AG04449 (cell line): ENCODE measurements at regions of chr11 and their contacts with region 1.

Region 1: DNA sequence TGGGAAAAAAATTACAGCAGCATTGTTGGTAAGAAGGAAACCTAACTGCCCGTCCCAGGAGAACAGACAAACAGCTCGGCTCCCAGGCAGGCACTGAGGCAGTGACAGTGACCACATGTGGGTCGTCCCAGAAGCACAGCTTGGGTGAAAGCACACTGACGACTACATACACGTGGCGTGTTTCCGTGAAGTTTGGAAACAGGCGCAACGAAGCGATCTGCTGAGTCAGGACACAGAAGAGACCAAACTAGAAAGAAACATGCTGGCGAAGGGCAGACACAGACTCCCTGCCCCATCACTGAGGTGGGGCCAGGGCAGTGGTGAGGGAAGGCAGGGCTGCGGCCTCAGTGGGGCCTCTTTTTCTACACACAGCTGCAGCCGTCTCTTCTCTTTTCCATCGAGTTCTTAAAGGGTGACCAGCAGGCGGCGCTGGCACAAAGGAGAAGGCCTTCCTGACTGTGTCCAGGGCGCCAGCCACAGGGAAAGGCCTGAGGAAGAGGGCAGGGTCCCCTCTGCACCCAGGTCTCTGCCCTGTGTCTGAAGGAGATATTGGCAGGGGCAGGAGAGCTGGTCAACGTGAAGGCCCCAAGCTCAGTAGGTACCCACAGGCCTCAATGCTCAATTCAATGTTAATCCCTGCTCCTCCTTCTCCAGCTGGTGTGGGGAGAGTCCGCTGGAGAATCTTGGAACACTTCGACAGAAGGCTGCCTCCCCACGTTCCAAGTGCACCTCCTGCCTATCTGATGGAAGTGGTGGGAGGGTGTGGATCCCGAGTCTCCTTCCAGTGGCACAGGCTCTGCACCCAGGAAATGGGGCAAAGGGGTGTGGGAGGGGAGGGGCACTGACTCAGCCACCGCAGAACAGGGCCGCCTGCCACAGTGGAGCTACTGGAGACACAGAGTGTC is 19.9 kb downstream of the CARS1 start:
- DNase-seq: no peak
- H3K4me3 ChIP-seq: no peak overlapping the region
- CTCF ChIP-seq: peak; percentile 78

Region 2: DNA sequence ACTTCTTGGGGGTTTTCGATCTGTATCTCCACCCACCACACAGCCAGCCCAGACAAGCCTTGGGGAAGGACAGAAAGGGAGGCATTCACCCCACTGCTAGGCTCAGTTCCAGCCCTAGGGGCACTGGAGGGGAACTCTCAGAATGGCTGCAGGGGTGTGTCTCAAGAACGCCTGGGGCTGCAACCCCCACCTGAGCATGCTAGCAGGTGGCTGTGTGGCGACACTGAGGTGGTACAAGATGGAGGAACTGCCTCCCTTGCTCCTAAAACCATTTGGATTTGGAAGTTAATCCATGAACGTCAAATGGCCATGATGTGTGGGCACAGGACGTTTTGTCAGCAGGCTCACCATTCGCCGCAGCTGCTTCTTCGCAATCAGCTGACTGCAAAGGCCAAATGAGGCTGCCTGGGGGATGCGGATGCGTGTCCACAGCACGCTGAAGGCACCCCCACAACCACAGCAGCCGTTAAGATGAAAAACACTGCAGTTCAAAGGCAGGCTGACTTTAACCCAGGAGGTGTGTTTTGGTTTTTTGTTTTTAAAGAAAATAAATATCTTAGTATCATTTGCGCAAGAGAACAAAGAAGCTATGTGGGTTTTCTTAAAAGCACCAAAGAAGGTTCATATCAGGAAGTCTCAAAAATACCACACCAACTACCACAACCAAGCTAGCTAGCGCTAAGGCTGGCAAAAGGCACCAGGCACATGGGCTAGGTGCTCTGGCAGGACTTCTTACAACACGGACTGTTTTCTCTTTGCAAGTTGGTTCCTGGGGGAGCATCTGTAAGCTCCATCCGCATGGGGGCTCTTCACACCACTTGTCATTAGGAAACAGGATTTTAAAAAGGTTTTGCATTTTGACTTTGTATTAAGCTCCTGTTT is 23.0 kb before region 1 on chr11:
- CTCF ChIA-PET with region 1: interaction called, 26 read pairs
- POLR2A ChIA-PET with region 1: no interaction called
- DNase-seq: no peak
- H3K4me3 ChIP-seq: no peak overlapping the region
- CTCF ChIP-seq: no peak

Region 3: DNA sequence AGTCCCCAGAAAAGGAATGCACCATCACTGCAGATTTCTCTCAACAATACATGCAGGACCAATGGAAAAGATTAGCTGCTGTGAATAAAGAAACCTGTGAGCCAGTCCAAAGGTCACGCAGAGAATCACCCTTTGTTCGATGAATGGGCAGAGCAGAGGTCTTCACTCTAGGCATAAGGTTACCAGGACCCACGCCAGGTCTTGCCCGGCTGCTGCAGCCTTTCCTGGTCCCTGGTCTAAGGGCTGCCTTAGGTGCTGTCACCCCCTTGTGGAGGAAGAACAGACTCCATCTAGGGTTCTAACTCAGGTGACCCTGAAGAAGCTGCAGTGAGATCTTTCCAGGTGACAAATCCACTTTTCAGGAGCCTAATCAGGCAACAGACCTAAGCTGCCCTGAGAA is 16.2 kb before region 1 on chr11:
- CTCF ChIA-PET with region 1: interaction called, 122 read pairs
- POLR2A ChIA-PET with region 1: no interaction called
- DNase-seq: no peak
- H3K4me3 ChIP-seq: no peak overlapping the region
- CTCF ChIP-seq: peak; percentile 47

Region 4: DNA sequence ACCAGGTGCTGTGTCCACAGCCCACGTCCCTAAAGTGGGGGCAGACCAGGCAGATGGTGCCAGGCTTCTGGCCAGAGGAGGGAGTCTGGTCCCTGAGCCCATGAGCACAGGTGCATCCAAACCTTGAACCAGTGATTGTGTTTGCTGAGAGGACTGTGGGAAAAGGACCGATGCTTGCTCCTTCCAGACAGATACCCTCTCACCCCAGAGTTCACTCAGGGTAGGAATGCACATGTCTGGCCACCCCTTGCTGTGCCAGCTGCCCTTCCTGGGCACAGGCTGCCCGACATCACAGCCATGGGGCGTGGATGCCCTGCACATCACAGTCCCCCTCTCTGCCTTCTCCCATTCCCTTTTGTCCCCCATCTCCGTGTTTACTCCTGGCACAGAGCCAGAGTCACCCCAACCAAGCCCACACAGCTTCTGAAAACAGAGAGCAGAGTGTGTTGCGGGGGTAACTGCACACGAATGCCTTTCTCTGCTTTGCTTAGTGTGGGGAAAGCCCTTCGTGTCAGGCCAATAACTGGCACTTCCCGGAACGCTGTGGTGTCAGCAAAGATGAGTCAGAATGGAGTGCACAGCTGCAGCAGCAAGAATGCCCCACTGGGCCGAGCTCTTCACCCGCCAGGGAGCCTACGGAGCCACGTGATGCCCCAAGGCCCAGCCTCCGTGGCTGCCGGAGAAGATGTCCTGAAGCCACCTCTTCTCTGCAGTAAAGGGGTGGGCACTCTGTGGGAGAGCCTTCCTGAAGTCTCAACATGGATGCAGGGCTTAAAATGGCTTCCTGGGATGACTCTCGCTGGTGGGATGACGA is 12.3 kb after region 1 on chr11:
- CTCF ChIA-PET with region 1: interaction called, 77 read pairs
- POLR2A ChIA-PET with region 1: interaction called, 4 read pairs
- DNase-seq: peak; percentile 79
- H3K4me3 ChIP-seq: peak overlapping the region; percentile 41
- CTCF ChIP-seq: peak; percentile 53

Region 5: GRCh38 chr11:3057069-3057963 is 20.0 kb after region 1 on chr11 and contains the start of gene CARS1:
- CTCF ChIA-PET with region 1: interaction called, 77 read pairs
- POLR2A ChIA-PET with region 1: no interaction called
- DNase-seq: peak; percentile 40
- H3K4me3 ChIP-seq: peak within 1 kb of the TSS; percentile 98
- CTCF ChIP-seq: no peak

Region 6: GRCh38 chr11:3086114-3086513 is 48.8 kb after region 1 on chr11:
- CTCF ChIA-PET with region 1: interaction called, 157 read pairs
- POLR2A ChIA-PET with region 1: no interaction called
- DNase-seq: no peak
- H3K4me3 ChIP-seq: no peak overlapping the region
- CTCF ChIP-seq: no peak

Region 7: GRCh38 chr11:3120071-3120792 is 82.9 kb after region 1 on chr11:
- CTCF ChIA-PET with region 1: no interaction called
- POLR2A ChIA-PET with region 1: no interaction called
- DNase-seq: no peak
- H3K4me3 ChIP-seq: no peak overlapping the region
- CTCF ChIP-seq: no peak

Region 8: DNA sequence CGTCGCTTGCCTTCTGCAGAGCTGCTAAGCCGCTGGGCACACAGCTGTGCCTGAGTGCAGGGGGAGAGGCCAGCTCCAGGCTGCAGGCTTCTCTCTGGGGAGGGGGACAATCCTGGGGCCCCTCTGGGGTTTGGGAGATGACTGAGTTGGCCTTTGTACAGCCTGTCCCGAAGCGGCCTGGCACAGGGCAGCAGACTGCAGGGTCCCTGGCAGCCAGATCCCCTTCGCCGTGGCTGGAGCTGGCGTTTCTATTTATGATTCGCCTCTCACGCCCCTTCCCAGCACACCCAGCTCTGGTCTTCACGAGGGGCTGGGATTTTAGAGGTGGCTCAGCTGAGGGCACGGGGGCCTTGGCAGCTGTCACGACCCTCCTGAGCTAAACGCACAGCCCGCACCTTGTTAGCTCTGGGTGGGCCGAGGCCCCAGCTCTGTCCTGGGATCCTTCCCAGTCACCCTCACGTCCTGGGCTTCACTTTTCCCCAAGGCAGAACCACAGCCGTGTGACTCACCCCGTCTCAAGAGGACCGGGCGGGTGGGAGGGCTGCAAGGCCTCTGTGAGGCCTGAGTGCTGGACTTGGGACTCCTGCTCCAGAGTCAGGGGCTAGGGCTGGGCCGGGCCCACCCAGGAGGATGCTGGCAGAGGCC is 109.4 kb after region 1 on chr11:
- CTCF ChIA-PET with region 1: no interaction called
- POLR2A ChIA-PET with region 1: no interaction called
- DNase-seq: no peak
- H3K4me3 ChIP-seq: no peak overlapping the region
- CTCF ChIP-seq: no peak

Region 9: GRCh38 chr11:3217676-3218482 is 180.6 kb after region 1 on chr11:
- CTCF ChIA-PET with region 1: interaction called, 12 read pairs
- POLR2A ChIA-PET with region 1: no interaction called
- DNase-seq: no peak
- H3K4me3 ChIP-seq: no peak overlapping the region
- CTCF ChIP-seq: no peak